HEK293T (cell line): ENCODE measurements at regions of chr1 and their contacts with region 1.

Region 1: DNA sequence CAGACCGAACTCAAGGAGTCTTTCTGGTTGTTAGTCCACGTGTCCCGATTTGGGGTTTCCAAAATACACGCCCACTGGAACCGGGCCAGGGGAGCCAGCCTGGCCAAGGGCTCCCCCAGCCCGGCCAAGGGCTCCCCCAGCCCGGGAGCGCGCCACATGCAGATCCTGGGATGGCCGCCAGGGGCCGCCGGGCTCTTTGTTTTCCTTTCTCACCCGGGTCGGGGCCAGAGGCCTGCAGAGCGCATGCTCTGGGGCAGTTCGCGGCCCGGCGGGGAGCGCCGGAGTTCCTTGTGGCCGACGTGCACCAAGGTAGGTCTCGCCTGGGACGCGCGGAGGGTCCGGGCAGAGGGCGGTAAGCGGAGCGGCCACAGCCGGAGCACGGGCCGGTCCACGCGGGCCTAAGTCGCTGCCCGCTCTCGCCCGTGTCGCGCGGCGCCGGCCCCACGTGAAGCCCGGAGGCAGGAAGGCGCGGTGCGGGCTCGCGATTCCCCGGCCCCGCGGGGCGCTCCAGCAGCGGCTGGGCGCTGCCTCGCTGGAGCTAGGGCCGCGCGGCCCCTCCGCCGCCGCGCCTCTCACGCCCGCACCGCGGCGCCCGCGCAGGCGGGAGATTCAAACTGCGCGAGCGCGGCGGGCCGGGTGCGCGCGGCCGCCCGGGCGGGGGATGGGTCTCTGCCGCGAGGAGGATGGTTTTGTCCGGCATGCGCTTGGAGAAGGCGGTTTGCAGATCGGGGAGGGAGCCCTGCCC is 12.3 kb downstream of the RCC1 start:
- DNase-seq: peak; percentile 96

Region 2: DNA sequence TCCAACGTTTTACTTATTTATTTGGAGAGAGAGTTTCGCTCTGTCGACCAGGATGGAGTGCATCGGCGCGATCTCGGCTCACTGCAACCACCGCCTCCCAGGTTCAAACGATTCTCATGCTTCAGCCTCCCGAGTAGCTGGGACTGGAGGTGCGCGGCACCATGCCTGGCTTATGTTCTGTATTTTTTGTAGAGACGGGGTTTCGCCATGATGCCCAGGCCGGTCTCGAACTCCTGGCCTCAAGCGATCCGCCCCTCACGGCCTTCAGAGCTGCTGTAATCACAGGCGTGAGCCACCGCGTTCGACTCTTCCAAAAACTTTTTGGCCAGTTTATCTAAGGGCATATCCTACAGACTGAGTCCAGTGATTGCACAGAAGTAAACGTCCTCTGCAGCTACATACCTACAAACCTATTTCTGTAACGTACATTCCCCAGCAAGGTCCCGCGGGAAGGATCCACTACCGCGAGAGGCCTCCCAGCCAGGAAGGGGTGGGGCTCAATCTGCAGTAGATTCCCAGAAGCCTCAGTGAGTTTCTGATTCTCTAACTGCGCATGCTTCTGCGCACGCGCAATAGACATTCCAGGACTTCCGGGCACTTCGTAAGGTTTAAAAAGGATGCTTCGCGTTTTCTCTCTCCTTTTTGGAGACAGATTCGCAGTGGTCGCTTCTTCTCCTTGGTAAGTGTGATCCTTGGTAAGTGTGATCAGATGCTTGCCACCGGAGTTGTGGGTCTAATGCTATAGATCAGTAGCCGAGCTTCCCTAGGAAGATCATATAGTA is 12.6 kb before region 1 on chr1 and contains the start of gene RCC1:
- CTCF ChIA-PET with region 1: interaction called, 3 read pairs
- POLR2A ChIA-PET with region 1: interaction called, 37 read pairs
- DNase-seq: peak; percentile 100